Mammary epithelial cell (primary cell): ENCODE measurements at regions of chr2 and their contacts with region 1.

Region 1: DNA sequence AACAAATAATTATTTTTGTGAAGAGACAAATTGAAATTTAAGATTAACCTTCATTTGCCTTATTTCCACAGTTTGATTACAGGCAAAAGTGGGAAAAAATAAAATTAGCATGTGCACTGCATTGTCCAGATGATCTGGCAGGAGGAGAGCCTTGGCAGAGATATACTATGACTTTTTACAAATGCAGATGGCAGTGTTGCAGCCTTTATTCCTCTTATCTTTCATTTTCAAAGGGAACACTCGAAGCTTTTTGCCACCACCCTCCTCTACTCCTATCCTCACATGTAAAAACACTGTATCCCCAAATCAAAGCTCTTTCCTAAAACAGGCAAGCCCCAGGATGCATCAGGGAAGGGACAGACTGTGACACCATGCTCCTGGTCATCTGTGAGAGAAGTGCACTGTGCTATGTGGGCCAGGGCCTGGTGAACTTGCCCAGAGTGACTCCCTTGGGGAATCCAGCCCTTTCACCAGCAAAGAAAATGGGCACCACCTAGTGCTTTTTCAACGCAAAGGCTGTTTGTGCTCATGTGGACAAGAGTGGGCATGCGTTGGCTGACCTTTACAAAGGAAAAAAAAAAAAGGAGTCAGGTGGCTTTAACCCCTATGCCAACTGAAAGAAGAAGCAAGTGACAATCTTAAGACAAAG is 74.7 kb upstream of the ETAA1 start:
- DNase-seq: peak; percentile 73
- H3K4me3 ChIP-seq: no peak overlapping the region
- H3K27ac ChIP-seq: no peak overlapping the region
- H3K4me1 ChIP-seq: peaks cover 3% of the 10 kb centered on the region
- H3K27me3 ChIP-seq: no peaks in the 10 kb centered on the region
- CTCF ChIP-seq: peak; percentile 82 to 87

Region 2: DNA sequence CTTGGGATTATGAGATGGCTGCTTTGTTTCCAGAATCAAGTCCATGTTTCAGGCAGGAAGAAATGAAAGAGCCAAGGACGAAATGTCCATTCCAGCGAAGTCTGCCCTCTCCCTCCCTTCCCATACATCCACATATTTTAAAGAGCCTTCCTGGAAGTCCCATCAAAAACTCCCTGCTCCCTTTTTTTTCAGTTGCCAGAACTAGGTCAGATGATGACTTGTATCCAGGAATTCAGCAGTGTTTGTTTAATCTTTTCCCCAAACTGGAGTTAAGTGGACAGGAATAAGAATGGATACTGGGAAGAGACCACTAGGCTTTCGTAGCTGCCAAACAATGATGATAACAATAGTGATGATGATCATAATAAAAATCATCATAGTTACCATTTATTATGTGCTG is 688.8 kb before region 1 on chr2:
- CTCF ChIA-PET with region 1: no interaction called
- dilution Hi-C with region 1: no loop called
- in situ Hi-C with region 1: no loop called
- intact Hi-C with region 1: no loop called
- DNase-seq: no peak
- H3K4me3 ChIP-seq: no peak overlapping the region
- H3K27ac ChIP-seq: no peak overlapping the region
- H3K4me1 ChIP-seq: no peaks in the 10 kb centered on the region
- H3K27me3 ChIP-seq: no peaks in the 10 kb centered on the region
- CTCF ChIP-seq: no peak

Region 3: DNA sequence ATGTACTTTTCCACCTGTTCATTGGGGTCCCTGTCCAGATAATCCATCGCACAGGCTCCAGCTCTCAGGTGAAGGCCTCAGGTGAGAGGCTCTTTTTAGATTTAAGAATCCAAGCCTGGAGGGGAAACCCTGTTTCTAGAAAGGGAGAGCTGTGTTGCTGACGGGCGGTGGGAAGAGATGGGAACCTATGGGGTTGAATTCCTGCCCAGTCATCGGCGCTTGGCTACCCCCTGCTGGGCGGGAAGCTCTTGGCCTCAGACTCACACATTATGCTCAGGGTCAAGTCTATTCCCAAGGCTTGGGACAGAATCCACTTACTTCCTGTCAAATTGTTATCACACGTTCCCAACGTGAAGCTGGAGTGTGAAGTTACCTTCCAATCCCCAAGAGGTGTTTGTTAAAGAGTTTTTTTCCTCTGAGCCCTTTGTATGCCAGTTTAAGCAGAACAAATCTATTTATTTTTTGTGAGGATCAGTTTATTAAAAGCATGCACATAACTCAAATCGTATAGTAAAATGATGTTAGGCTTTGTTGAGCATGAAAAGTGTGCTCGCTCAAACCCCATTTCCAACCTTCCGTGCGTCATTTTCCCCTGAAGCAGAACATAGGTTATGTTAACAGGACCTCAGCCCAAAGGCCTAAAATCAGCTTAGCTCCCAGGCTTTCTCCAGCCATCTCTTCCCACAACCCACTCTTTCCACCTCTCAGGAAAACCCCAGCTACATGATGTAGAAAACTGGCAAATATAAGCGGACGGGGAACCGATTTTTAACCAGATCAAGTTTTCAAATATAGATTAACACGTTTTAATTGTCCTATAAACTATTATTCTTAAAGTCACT is 107.0 kb before region 1 on chr2:
- CTCF ChIA-PET with region 1: no interaction called
- dilution Hi-C with region 1: no loop called
- in situ Hi-C with region 1: no loop called
- intact Hi-C with region 1: loop called (anchors 2 kb)
- DNase-seq: peak; percentile 46
- H3K4me3 ChIP-seq: no peak overlapping the region
- H3K27ac ChIP-seq: no peak overlapping the region
- H3K4me1 ChIP-seq: no peaks in the 10 kb centered on the region
- H3K27me3 ChIP-seq: no peaks in the 10 kb centered on the region
- CTCF ChIP-seq: peak; percentile 49 to 71

Region 4: DNA sequence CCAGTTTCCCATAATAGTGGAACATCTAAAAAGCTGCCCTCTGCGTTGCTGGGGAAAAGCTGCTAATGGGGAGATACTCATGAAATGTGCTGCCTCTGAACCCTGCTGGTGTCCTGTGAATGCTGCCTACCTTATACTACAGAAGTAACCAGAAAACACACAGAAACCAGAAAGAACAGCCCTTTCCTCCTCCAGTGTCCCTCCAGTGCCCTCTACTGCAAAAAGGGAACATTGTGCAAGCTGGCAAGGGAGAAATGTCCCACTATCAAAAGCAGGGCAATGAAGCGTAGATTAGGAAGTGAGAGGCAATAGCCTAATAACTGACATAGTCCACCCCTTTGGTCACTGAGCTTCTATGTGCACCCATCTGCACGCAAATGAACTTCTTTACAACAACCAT is 88.0 kb before region 1 on chr2:
- CTCF ChIA-PET with region 1: no interaction called
- dilution Hi-C with region 1: no loop called
- in situ Hi-C with region 1: no loop called
- intact Hi-C with region 1: loop called (anchors 1 kb)
- DNase-seq: peak; percentile 17
- H3K4me3 ChIP-seq: no peak overlapping the region
- H3K27ac ChIP-seq: no peak overlapping the region
- H3K4me1 ChIP-seq: no peaks in the 10 kb centered on the region
- H3K27me3 ChIP-seq: no peaks in the 10 kb centered on the region
- CTCF ChIP-seq: peak in 1 of 2 donors; percentile 53

Region 5: DNA sequence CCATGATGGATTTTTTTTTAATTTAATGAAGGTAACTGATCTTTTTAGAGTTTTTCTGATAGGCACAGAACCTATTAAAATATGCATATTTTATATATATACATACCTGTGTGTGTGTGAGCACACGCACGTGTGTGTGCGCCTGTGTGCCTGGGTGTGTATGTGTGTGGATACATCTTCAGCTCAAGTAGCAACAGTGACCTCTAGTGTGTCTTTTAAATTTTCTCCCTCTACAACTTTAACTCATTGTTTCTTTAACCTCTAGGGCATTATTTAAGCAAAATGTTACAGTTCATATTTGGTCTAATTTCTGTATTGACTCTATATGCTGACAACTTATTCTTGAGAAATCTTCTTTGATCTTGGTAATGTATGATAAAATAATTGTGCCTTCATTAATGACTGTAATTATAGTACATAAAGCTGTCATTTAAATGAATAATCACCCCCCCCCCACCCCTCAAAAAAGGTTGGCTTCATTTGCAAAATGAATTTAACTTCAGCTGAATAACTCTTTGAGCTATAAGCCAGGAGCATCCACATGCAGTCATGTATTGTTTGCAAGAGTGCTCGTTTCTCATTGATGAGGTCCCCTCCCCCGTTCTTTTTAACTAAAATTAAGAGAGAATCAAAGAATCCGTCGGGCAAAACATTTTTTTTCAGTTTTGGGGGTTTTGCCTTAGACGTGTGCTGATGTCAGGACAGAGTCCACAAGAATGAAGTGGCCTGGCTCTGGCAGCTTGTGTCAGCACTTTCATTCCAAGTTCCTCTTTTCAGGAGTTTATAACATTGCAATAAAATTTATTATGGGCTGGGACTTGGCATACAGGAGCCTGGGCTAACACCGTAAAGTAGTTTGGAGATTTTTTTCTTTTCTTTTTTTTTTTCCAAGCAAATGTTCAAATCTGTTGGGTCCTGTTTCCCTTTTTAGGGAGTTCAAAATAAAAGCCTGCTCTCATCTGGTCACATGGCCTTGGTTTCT is 154.6 kb after region 1 on chr2:
- CTCF ChIA-PET with region 1: no interaction called
- dilution Hi-C with region 1: no loop called
- in situ Hi-C with region 1: no loop called
- intact Hi-C with region 1: loop called (anchors 1 kb)
- DNase-seq: peak; percentile 41
- H3K4me3 ChIP-seq: no peak overlapping the region
- H3K27ac ChIP-seq: no peak overlapping the region
- H3K4me1 ChIP-seq: no peaks in the 10 kb centered on the region
- H3K27me3 ChIP-seq: no peaks in the 10 kb centered on the region
- CTCF ChIP-seq: peak; percentile 52 to 72

Region 6: GRCh38 chr2:67840460-67841068 is 518.1 kb after region 1 on chr2:
- CTCF ChIA-PET with region 1: no interaction called
- dilution Hi-C with region 1: no loop called
- in situ Hi-C with region 1: no loop called
- intact Hi-C with region 1: loop called (anchors 1 kb)
- DNase-seq: peak; percentile 56
- H3K4me3 ChIP-seq: no peak overlapping the region
- H3K27ac ChIP-seq: no peak overlapping the region
- H3K4me1 ChIP-seq: no peaks in the 10 kb centered on the region
- H3K27me3 ChIP-seq: no peaks in the 10 kb centered on the region
- CTCF ChIP-seq: peak; percentile 93 to 95